Stomach (tissue), 19 donors: ENCODE measurements at regions of chr1 and their contacts with region 1.

Region 1: GRCh38 chr1:115138968-115139367 is 49.7 kb upstream of the TSPAN2 start:
- DNase-seq: peak; percentile 88 to 96
- H3K4me3 ChIP-seq: no peak overlapping the region
- H3K27ac ChIP-seq: peak overlapping the region in 1 of 5 donors; percentile 32
- H3K4me1 ChIP-seq: peaks cover 0 to 21% (median 5%) of the 10 kb centered on the region in 4 donors
- H3K27me3 ChIP-seq: no peaks in the 10 kb centered on the region
- CTCF ChIP-seq: peak in 5 of 7 experiments; percentile 73 to 91 (median 81)
- EP300 ChIP-seq: no peak
- POLR2A ChIP-seq: no peak

Region 2: DNA sequence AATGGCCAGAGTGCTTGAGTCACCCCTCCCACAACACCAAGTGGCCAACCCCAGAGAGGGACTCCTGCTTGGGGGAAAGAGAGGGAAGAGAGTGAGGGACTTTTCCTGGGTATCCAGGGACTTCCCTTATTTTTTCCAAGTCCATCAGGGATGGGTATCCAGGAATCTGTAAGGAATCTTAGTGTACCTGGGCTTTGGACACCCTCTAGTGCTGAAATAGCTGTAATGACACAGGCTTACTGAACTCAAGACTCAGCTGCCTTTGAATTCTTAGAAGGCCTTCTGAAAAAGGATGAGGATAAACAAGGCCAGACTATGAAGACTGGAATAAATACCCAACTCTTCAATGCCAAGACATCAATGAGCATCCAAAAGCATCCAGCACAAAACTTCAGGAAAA is 97.3 kb before region 1 on chr1:
- intact Hi-C with region 1: no loop called
- DNase-seq: peak in 1 of 2 donors; percentile 26
- H3K4me3 ChIP-seq: no peak overlapping the region
- H3K27ac ChIP-seq: no peak overlapping the region
- H3K4me1 ChIP-seq: peaks cover 0 to 19% (median 12%) of the 10 kb centered on the region in 4 donors
- H3K27me3 ChIP-seq: no peaks in the 10 kb centered on the region
- CTCF ChIP-seq: peak in 2 of 7 experiments; percentile 24 to 40
- EP300 ChIP-seq: no peak
- POLR2A ChIP-seq: no peak

Region 3: GRCh38 chr1:115469703-115470476 is 330.9 kb after region 1 on chr1:
- intact Hi-C with region 1: loop called (anchors 5 kb)
- DNase-seq: peak; percentile 53 to 62
- H3K4me3 ChIP-seq: no peak overlapping the region
- H3K27ac ChIP-seq: no peak overlapping the region
- H3K4me1 ChIP-seq: peaks cover 0 to 6% (median 0%) of the 10 kb centered on the region in 4 donors
- H3K27me3 ChIP-seq: no peaks in the 10 kb centered on the region
- CTCF ChIP-seq: peak in 5 of 7 experiments; percentile 67 to 90 (median 79)
- EP300 ChIP-seq: no peak
- POLR2A ChIP-seq: no peak

Region 4: DNA sequence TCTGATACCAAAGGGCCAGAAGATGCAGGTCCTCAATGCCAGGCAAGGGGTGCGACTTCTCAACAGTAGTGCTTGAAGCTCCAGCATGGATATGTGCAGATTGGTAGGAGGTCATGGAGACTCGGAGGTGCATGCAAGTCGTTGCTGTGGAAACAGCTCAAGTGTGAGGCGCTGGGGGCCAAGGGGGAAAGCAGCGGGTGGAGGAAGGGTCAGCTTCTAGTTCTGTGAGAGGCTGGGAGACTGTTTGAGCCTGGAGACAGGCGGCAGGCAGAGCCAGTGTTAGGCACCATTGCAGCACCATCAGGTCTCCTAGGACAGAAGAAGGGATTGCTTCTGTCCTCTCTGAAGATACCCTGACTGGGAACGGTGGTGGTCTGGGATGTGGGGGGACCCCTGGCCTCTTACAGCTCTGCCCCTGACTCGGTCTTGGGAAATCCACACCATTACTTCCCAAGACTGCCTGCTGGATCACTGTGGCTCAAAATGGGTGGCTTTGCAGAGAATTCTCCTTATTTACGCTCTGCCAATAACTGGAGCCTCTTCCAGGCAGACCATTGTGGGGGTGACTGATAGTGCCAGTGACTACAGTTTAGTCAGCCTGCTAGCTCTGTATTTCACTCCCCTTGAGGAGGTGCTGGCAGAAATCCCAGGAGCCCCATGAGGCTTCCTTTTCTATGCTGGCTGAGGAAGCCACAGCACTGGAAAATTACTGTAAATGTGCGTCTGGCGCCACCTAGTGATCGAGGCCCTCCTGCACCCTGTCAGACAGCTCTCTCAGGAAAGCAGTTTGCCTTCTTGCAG is 456.5 kb after region 1 on chr1:
- intact Hi-C with region 1: loop called (anchors 5 kb)
- DNase-seq: peak; percentile 82 to 95
- H3K4me3 ChIP-seq: no peak overlapping the region
- H3K27ac ChIP-seq: no peak overlapping the region
- H3K4me1 ChIP-seq: peaks cover 0 to 5% (median 0%) of the 10 kb centered on the region in 4 donors
- H3K27me3 ChIP-seq: no peaks in the 10 kb centered on the region
- CTCF ChIP-seq: peak in 5 of 7 experiments; percentile 49 to 81 (median 80)
- EP300 ChIP-seq: no peak
- POLR2A ChIP-seq: no peak